Activated B cell treated with CpG ODN at 0.5 μM for 24 hours (primary cell): ENCODE measurements at regions of chr3 and their contacts with region 1.

Region 1: DNA sequence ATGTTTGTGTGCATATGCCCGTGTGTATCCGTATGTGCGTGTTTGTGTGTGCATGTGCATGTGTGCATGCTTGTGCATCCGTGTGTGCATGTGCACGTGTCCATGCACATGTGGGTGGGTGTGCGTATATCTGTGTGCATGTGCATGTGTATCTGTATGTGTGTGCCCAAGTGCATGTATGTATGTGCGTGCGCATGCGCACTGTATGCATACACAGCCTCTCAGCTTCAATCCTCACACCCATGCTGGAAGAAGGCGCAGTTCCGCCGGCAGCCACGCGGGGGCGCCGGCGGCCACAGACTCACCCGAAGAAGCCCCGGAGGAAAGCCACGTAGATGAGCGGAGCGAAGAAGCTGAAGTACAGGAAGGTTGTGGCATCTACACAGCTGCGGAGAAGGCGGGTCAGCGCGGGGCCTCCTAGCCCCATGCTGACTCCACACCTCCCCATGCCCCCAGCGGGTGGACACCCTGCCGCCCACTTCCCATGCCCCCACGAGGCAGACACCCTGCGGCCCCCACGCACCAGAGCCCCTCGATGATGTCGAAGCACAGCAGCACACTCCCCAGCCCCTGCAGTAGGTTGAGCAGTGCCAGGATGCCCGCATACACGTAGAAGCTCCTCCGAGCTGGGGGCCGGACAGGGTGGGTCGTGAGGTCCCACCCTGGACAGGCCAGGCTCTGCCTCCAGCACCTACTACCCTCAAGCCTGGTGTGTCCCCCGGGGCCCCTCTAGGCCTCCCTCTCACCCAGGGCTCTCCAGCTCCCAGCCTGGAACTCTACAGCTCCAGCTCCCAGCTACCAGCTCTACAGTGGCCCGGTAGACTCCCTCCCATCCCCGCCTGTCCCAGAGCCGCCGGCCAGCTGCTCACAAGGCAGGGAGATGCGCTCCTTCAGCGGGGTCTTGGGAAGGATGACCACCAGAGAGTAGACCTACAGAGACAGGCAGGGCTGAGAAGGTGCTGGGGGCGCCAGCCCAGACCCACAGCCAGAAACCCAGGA is 15.4 kb downstream of the TPRA1 start:
- DNase-seq: peak; percentile 83
- ATAC-seq: peak; percentile 99
- H3K4me3 Mint-ChIP-seq: no peak overlapping the region
- H3K27ac Mint-ChIP-seq: peak overlapping the region; percentile 36
- H3K4me1 Mint-ChIP-seq: peaks cover 9% of the 10 kb centered on the region
- H3K27me3 Mint-ChIP-seq: no peaks in the 10 kb centered on the region
- CTCF ChIP-seq: no peak

Region 2: DNA sequence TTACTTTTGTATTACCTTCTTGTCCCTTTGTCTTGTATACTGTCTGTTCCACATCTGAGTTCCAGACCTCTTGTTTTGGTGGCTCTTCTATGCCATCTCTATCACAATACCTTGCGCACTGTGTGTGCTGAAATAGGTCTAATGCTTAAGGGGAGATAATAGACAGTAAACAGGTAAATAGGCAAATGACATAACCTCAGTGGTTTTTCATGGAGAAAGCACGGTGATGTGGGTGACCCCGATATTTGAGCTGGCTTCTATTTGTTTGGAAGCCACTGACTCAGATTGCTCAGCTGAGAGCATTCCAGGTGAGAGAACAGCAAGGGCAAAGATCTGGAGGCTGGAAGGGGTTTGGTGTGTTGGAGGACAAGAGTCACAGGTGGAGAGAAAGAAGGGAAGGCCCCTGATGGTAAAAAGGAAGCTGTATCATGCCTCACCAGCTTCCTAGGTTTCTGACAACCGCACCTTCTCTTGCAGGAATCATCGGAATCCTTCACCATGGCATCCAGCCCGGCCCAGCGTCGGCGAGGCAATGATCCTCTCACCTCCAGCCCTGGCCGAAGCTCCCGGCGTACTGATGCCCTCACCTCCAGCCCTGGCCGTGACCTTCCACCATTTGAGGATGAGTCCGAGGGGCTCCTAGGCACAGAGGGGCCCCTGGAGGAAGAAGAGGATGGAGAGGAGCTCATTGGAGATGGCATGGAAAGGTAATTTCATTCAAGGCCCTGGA is 23.8 kb after region 1 on chr3:
- CTCF ChIA-PET with region 1: interaction called, 10 read pairs
- POLR2A ChIA-PET with region 1: interaction called, 8 read pairs
- intact Hi-C with region 1: no loop called
- DNase-seq: no peak
- ATAC-seq: no peak
- H3K4me3 Mint-ChIP-seq: peak overlapping the region; percentile 95
- H3K27ac Mint-ChIP-seq: peak overlapping the region; percentile 93
- H3K4me1 Mint-ChIP-seq: peaks cover 29% of the 10 kb centered on the region
- H3K27me3 Mint-ChIP-seq: no peaks in the 10 kb centered on the region
- CTCF ChIP-seq: no peak

Region 3: DNA sequence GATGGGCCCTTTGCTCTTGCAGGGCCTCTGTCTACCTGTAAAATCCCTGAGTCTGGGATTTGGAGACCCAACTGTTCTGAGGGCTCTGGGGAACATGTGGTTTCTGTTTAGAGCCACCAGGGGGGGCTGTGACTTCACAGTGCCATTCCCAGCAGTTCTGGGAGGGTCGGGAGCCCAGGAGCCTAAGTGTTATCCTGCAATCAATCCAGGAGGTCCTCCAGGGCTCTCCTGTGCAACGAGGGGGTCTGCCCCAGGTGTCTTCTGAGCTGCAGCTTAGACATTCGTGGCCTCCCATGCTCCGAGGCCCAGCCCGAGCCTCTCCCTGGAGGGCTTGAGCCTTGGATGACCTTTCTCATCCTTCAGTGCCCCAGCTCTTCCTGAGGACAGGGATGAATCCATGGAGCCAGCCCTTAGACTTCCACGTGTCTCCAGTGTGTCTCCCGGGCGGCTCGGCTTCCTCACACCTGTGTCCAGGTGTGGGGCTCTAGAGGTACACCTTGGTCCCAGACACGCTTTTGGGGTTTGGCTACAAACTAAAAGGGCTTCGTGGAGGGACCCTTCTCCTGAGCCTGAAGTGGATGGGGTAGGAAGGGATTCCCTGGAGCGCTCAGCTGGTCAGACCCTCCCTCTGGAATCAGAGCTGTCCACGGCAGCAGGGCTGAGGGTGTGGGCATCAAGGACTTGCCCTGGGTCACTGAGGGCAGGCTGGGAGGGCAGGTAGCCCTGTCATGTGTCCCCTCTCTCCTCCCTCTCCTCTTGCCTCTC is 77.2 kb after region 1 on chr3:
- CTCF ChIA-PET with region 1: interaction called, 11 read pairs
- POLR2A ChIA-PET with region 1: no interaction called
- intact Hi-C with region 1: loop called (anchors 1 kb)
- DNase-seq: no peak
- ATAC-seq: peak; percentile 76
- H3K4me3 Mint-ChIP-seq: no peak overlapping the region
- H3K27ac Mint-ChIP-seq: no peak overlapping the region
- H3K4me1 Mint-ChIP-seq: no peaks in the 10 kb centered on the region
- H3K27me3 Mint-ChIP-seq: no peaks in the 10 kb centered on the region
- CTCF ChIP-seq: peak; percentile 5

Region 4: DNA sequence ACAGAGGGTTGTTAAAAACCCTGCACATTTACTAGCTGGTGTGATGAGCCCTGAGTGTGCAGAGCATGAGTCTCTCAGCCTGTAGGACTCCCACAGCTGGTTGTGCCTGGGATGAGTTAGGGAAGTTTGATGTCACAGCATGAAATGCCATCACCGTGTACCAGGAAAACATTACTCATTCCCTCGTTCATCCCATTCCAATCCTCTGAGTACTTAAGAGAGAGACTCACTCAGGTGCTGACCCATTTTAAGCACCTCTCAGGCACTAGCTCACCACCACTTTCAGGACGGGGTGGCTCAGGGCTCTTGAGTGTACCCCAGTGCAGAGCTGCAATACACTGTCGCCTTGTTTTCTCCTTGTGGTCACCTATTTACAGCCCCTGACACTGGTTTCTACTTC is 228.4 kb after region 1 on chr3:
- CTCF ChIA-PET with region 1: no interaction called
- POLR2A ChIA-PET with region 1: no interaction called
- intact Hi-C with region 1: no loop called
- DNase-seq: no peak
- ATAC-seq: no peak
- H3K4me3 Mint-ChIP-seq: no peak overlapping the region
- H3K27ac Mint-ChIP-seq: no peak overlapping the region
- H3K4me1 Mint-ChIP-seq: peaks cover 14% of the 10 kb centered on the region
- H3K27me3 Mint-ChIP-seq: no peaks in the 10 kb centered on the region
- CTCF ChIP-seq: no peak

Region 5: GRCh38 chr3:127831723-127832172 is 256.6 kb after region 1 on chr3:
- CTCF ChIA-PET with region 1: interaction called, 12 read pairs
- POLR2A ChIA-PET with region 1: no interaction called
- intact Hi-C with region 1: loop called (anchors 2 kb)
- DNase-seq: peak; percentile 32
- ATAC-seq: no peak
- H3K4me3 Mint-ChIP-seq: no peak overlapping the region
- H3K27ac Mint-ChIP-seq: no peak overlapping the region
- H3K4me1 Mint-ChIP-seq: peaks cover 40% of the 10 kb centered on the region
- H3K27me3 Mint-ChIP-seq: no peaks in the 10 kb centered on the region
- CTCF ChIP-seq: no peak

Region 6: GRCh38 chr3:127970966-127971592 is 395.9 kb after region 1 on chr3:
- CTCF ChIA-PET with region 1: interaction called, 12 read pairs
- POLR2A ChIA-PET with region 1: no interaction called
- intact Hi-C with region 1: loop called (anchors 1 kb)
- DNase-seq: no peak
- ATAC-seq: peak; percentile 67
- H3K4me3 Mint-ChIP-seq: no peak overlapping the region
- H3K27ac Mint-ChIP-seq: no peak overlapping the region
- H3K4me1 Mint-ChIP-seq: no peaks in the 10 kb centered on the region
- H3K27me3 Mint-ChIP-seq: peaks cover 5% of the 10 kb centered on the region
- CTCF ChIP-seq: peak; percentile 30